ENCODE measurements at regions of chr19 and their contacts with region 1.

Region 1: DNA sequence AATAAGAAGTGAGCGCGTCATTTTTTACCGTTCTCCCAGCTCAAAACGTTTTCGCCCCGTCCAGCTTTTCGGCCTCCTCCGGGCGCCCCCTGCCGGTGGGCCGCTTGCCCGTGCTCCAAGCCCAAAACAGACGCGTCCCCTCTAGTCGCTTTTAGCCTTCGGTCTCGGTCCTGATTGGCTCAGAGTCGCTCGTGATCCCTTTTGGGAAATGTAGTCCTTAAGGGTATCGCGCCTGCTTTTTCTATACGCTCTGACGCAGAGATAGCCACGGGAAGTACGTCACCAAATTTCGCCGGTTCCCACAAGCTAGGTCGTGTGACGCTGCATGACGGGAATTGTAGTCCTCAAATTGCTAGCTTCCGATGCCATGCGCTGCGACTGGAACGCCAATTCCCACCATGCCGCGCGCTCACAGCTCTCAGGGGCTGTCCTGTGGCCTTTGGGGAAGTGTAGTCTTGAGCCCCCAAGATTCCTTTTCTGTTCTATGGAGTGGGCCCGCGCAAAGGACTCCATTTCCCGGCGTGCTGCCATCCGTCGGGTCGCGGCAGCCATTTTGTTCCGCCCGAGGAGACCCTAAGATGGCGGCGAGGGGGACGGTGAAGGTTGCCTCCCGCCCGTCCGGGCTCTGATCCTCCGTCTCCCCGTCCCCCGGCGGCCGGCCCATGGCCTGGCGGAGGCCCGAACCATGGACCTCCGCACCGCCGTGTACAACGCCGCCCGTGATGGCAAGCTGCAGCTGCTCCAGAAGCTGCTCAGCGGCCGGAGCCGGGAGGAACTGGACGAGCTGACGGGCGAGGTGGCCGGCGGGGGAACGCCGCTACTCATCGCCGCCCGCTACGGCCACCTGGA is at the start of gene FEM1A:
- DNase-seq: peak; percentile 100
- ATAC-seq: peak; percentile 93
- H3K4me3 ChIP-seq: peak within 1 kb of the TSS; percentile 68 to 100 (median 92)
- H3K27ac ChIP-seq: peak within 1 kb of the TSS; percentile 91 to 100 (median 94)
- H3K4me1 ChIP-seq: peaks cover 40 to 46% of the 10 kb centered on the region in 2 donors
- H3K27me3 ChIP-seq: no peaks in the 10 kb centered on the region
- CTCF ChIP-seq: peak; percentile 97 to 98 (median 98)
- POLR2A ChIP-seq: peak; percentile 78 to 84
- total RNA-seq, gene FEM1A: 246 to 360 (median 300) TPM

Region 2: GRCh38 chr19:4676955-4677731 is 114.3 kb before region 1 on chr19:
- in situ Hi-C with region 1: no loop called
- intact Hi-C with region 1: no loop called
- DNase-seq: peak in 1 of 2 donors; percentile 80
- ATAC-seq: peak; percentile 76 to 81
- H3K4me3 ChIP-seq: no peak overlapping the region
- H3K27ac ChIP-seq: peak overlapping the region; percentile 81 to 90 (median 87)
- H3K4me1 ChIP-seq: peaks cover 8 to 14% of the 10 kb centered on the region in 2 donors
- H3K27me3 ChIP-seq: no peaks in the 10 kb centered on the region
- CTCF ChIP-seq: peak; percentile 60 to 92 (median 73)
- POLR2A ChIP-seq: peak in 1 of 2 donors; percentile 21

Region 3: DNA sequence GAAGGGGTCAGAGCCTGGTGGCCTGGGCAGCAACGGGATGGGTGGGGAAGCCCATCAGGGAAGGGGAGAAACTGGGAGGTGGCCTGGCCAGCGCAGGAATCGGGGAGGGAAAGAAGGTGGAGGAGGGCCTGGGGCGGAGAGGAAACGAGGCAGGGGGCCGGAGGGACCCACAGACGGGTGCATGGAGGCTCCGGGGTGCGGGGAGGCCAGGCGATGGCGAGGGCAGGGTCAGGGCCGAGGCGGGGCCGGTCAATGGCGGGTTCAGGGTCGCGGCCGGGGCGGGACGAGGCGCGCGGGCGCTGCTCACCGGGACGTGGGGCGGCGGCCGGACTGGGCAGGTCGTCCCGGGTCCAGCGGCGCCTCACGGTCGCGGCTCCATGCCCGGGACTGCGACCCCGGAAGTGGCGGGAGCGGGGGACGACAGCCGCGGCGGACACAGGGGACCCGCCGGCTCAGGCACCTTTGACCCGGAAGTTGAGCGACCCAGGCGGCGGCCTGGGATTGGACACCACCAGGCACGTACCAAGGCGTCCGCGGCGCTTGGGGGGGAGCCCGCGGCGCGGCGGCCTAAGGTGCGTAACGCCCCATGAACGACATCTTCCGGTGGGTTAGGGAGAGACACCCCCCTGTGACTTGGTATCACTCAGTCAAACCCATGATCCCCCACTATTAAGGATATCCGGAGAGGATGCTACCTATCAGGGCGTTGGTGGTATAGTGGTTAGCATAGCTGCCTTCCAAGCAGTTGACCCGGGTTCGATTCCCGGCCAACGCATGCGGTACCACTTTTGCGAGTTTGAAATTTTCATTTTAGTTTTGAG is 67.8 kb before region 1 on chr19 and contains the start of gene DPP9:
- in situ Hi-C with region 1: loop called in 1 of 4 experiments (anchors 5 kb)
- intact Hi-C with region 1: loop called (anchors 1 kb)
- DNase-seq: peak; percentile 97 to 99
- ATAC-seq: peak; percentile 92 to 94
- H3K4me3 ChIP-seq: peak within 1 kb of the TSS; percentile 76 to 100 (median 94)
- H3K27ac ChIP-seq: peak within 1 kb of the TSS; percentile 79 to 99 (median 96)
- H3K4me1 ChIP-seq: peaks cover 12 to 18% of the 10 kb centered on the region in 2 donors
- H3K27me3 ChIP-seq: no peaks in the 10 kb centered on the region
- CTCF ChIP-seq: peak in 4 of 5 experiments; percentile 18 to 68 (median 38)
- POLR2A ChIP-seq: peak; percentile 93 to 97
- total RNA-seq, gene DPP9: 92.6 to 208 (median 148) TPM

Region 4: DNA sequence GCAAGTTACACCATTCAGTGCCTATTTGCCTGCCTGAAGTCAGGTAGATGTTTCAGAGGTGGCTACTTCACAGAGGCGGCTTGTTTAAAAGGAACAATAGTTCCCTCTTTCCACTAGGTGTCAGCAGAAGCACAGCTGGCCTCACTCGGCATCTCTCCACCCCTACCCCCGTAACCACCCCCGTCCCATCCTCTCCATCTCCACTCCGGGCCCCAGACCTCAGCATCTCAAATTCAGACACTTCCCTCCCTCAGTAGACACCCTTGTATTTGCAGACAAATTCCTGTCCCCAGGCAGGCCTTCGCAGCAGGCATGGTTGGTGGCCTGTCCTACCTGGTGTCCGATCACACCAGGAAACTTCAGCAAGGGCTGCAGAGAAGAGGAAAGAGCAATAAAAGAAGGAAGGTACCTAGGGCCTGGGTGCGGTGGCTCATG is 58.7 kb before region 1 on chr19:
- in situ Hi-C with region 1: loop called in 1 of 4 experiments (anchors 5 kb)
- intact Hi-C with region 1: no loop called
- DNase-seq: peak in 1 of 2 donors; percentile 37
- ATAC-seq: peak; percentile 90 to 93
- H3K4me3 ChIP-seq: no peak overlapping the region
- H3K27ac ChIP-seq: no peak overlapping the region
- H3K4me1 ChIP-seq: no peaks in the 10 kb centered on the region
- H3K27me3 ChIP-seq: no peaks in the 10 kb centered on the region
- CTCF ChIP-seq: peak; percentile 43 to 83 (median 79)
- POLR2A ChIP-seq: no peak

Region 5: DNA sequence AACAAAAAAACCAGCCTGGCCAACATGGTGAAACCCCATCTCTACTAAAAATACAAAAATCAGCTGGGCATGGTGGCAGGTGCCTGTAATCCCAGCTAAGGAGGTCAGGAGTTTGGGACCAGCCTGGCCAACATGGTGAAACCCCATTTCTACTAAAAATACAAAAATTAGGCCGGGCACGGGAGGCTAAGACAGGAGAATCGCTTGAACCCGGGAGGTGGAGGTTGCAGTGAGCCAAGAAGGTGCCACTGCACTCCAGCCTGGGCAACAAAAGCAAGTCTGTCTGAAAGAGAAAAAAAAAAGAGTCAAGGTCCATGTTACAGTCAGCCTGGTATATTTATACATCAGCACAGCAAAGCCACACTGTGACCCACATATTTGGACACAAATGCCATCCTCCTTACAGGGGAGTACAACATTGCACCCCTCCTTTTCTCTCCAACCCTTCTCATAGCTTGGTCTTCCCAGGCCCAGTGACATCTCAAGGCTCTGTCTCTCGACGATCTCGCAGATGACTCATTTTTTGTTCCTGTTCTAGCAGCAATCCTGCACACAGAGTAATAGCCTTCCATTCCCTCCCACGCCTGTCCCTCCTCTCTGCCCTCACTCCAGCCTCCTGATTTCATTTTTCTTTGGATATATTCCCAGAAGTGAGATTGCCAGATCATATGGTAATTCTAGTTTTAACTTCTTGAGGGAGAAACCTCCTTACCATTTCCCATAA is 46.8 kb before region 1 on chr19:
- in situ Hi-C with region 1: no loop called
- intact Hi-C with region 1: no loop called
- DNase-seq: peak; percentile 23 to 43
- ATAC-seq: peak; percentile 86 to 93
- H3K4me3 ChIP-seq: peak overlapping the region in 1 of 4 donors; percentile 9
- H3K27ac ChIP-seq: peak overlapping the region; percentile 5 to 72 (median 42)
- H3K4me1 ChIP-seq: peaks cover 4 to 14% of the 10 kb centered on the region in 2 donors
- H3K27me3 ChIP-seq: peaks cover 5 to 9% (median 5%) of the 10 kb centered on the region in 3 donors
- CTCF ChIP-seq: no peak
- POLR2A ChIP-seq: no peak

Measured in gastrocnemius medialis (tissue), 4 donors.